H1 (cell line): ENCODE measurements at regions of chr7 and their contacts with region 1.

Region 1: GRCh38 chr7:72334066-72334465 is 78.1 kb downstream of the CALN1 start:
- DNase-seq: peak in 1 of 2 experiments; percentile 48
- H3K4me3 ChIP-seq: no peak overlapping the region
- H3K27ac ChIP-seq: no peak overlapping the region
- H3K4me1 ChIP-seq: peaks cover 4 to 17% (median 13%) of the 10 kb centered on the region in 4 experiments
- H3K27me3 ChIP-seq: peaks cover 0 to 19% (median 9%) of the 10 kb centered on the region in 4 experiments; a peak in 6 of 7 replicates
- CTCF ChIP-seq: peak in 2 of 3 experiments; percentile 57 to 77; a peak in 2 of 4 replicates
- EP300 ChIP-seq: no peak
- POLR2A ChIP-seq: no peak
- RAD21 ChIP-seq: peak; percentile 66 to 72

Region 2: DNA sequence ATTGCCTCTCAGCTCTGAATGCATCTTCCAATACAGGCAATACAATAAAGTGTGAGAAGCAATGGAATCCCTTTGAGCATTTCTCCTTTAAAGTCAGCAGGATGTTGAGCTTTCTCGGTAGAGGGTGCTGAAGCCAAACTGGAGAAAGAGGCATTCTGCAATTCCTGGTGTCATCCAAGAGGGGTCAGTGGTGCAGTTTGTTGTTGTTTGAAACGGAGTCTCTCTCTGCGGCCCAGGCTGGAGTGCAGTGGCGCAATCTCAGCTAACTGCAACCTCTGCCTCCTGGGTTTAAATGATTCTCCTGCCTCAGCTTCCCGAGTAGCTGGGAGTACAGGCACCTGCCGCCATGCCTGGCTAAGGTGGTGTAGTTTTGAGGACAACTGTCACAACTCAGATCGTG is 408.4 kb before region 1 on chr7:
- CTCF ChIA-PET with region 1: interaction called, 13 read pairs
- POLR2A ChIA-PET with region 1: no interaction called
- DNase-seq: peak; percentile 50 to 59
- H3K4me3 ChIP-seq: no peak overlapping the region
- H3K27ac ChIP-seq: no peak overlapping the region
- H3K4me1 ChIP-seq: no peaks in the 10 kb centered on the region
- H3K27me3 ChIP-seq: no peaks in the 10 kb centered on the region
- CTCF ChIP-seq: peak; percentile 66 to 99 (median 96)
- EP300 ChIP-seq: no peak
- POLR2A ChIP-seq: no peak
- RAD21 ChIP-seq: peak; percentile 93

Region 3: DNA sequence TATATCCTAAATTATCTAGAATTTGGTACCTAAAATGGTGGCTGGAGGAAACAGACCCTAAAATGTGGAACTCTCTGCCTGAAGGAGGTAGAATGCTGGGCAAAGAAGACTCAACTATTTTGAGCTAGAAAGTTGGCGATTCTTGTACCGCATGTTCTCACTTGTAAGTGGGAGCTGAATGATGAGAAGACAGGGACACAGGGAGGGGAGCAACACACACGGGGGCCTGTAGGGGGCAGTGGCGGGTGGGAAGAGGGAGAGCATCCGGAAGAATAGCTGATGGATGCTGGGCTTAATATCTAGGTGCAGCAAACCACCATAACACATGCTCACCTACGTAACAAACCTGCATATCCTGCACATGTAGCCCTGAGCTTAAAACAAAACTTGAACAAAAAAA is 172.5 kb before region 1 on chr7:
- CTCF ChIA-PET with region 1: interaction called, 29 read pairs
- POLR2A ChIA-PET with region 1: no interaction called
- DNase-seq: peak in 1 of 2 experiments; percentile 89
- H3K4me3 ChIP-seq: no peak overlapping the region
- H3K27ac ChIP-seq: no peak overlapping the region
- H3K4me1 ChIP-seq: no peaks in the 10 kb centered on the region
- H3K27me3 ChIP-seq: no peaks in the 10 kb centered on the region
- CTCF ChIP-seq: peak; percentile 63 to 90 (median 83)
- EP300 ChIP-seq: no peak
- POLR2A ChIP-seq: no peak
- RAD21 ChIP-seq: peak; percentile 75 to 80

Region 4: GRCh38 chr7:72267291-72267800 is 66.7 kb before region 1 on chr7:
- CTCF ChIA-PET with region 1: interaction called, 26 read pairs
- POLR2A ChIA-PET with region 1: interaction called, 3 read pairs
- DNase-seq: no peak
- H3K4me3 ChIP-seq: no peak overlapping the region
- H3K27ac ChIP-seq: peak overlapping the region; percentile 1; the same call in 1 of the 2 replicates
- H3K4me1 ChIP-seq: peaks cover 11 to 29% (median 20%) of the 10 kb centered on the region in 4 experiments
- H3K27me3 ChIP-seq: no peaks in the 10 kb centered on the region
- CTCF ChIP-seq: no peak
- EP300 ChIP-seq: no peak
- POLR2A ChIP-seq: no peak
- RAD21 ChIP-seq: no peak

Region 5: GRCh38 chr7:72286519-72286918 is 47.5 kb before region 1 on chr7:
- CTCF ChIA-PET with region 1: interaction called, 11 read pairs
- POLR2A ChIA-PET with region 1: no interaction called
- DNase-seq: no peak
- H3K4me3 ChIP-seq: no peak overlapping the region
- H3K27ac ChIP-seq: no peak overlapping the region
- H3K4me1 ChIP-seq: no peaks in the 10 kb centered on the region
- H3K27me3 ChIP-seq: no peaks in the 10 kb centered on the region
- CTCF ChIP-seq: no peak
- EP300 ChIP-seq: no peak
- POLR2A ChIP-seq: no peak
- RAD21 ChIP-seq: no peak

Region 6: GRCh38 chr7:72321081-72321480 is 13.0 kb before region 1 on chr7:
- CTCF ChIA-PET with region 1: interaction called, 50 read pairs
- POLR2A ChIA-PET with region 1: interaction called, 4 read pairs
- DNase-seq: no peak
- H3K4me3 ChIP-seq: no peak overlapping the region
- H3K27ac ChIP-seq: no peak overlapping the region
- H3K4me1 ChIP-seq: peaks cover 0 to 3% (median 0%) of the 10 kb centered on the region in 4 experiments; a peak in 3 of 7 replicates
- H3K27me3 ChIP-seq: no peaks in the 10 kb centered on the region
- CTCF ChIP-seq: no peak
- EP300 ChIP-seq: no peak
- POLR2A ChIP-seq: no peak
- RAD21 ChIP-seq: no peak